ENCODE measurements at regions of chr15 and their contacts with region 1.

Region 1: GRCh38 chr15:95105229-95105628 is 873.9 kb downstream of the MCTP2 start:
- DNase-seq: no peak
- H3K4me3 ChIP-seq: no peak overlapping the region
- H3K27ac ChIP-seq: no peak overlapping the region
- H3K4me1 ChIP-seq: no peaks in the 10 kb centered on the region
- H3K27me3 ChIP-seq: no peaks in the 10 kb centered on the region
- CTCF ChIP-seq: no peak

Region 2: GRCh38 chr15:94930441-94930840 is 174.8 kb before region 1 on chr15:
- intact Hi-C with region 1: no loop called
- DNase-seq: no peak
- H3K4me3 ChIP-seq: no peak overlapping the region
- H3K27ac ChIP-seq: no peak overlapping the region
- H3K4me1 ChIP-seq: peaks cover 0 to 3% of the 10 kb centered on the region in 2 donors
- H3K27me3 ChIP-seq: no peaks in the 10 kb centered on the region
- CTCF ChIP-seq: no peak

Region 3: DNA sequence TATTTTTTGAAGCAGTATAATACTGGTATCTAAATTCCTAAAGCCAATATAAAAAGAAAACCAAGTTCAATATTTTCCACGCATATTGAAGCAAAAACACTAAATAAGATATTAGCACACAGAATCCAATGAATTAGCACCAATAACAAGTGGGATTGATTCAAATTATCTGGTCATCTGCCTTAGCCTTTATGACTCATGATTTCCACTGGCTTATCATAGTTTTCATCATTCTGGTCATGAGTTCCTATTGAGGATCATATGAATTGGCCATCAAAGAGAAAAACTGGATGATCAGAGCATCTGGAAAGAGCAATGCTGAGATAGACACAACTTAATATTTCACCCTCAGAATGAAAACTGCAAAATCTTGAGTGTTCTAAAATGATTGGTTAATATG is 63.9 kb before region 1 on chr15:
- intact Hi-C with region 1: loop called (anchors 10 kb)
- DNase-seq: no peak
- H3K4me3 ChIP-seq: no peak overlapping the region
- H3K27ac ChIP-seq: no peak overlapping the region
- H3K4me1 ChIP-seq: no peaks in the 10 kb centered on the region
- H3K27me3 ChIP-seq: no peaks in the 10 kb centered on the region
- CTCF ChIP-seq: no peak

Measured in ascending aorta (tissue), 2 donors.